ENCODE measurements at regions of chr3 and their contacts with region 1.

Region 1: GRCh38 chr3:117074826-117075225 is 365.2 kb downstream of the TUSC7 start:
- DNase-seq: no peak
- ATAC-seq: no peak
- H3K4me3 ChIP-seq: no peak overlapping the region
- H3K27ac ChIP-seq: no peak overlapping the region
- H3K4me1 ChIP-seq: no peaks in the 10 kb centered on the region
- H3K27me3 ChIP-seq: no peaks in the 10 kb centered on the region
- CTCF ChIP-seq: no peak

Region 2: GRCh38 chr3:117052395-117052794 is 22.4 kb before region 1 on chr3:
- CTCF ChIA-PET with region 1: no interaction called
- POLR2A ChIA-PET with region 1: no interaction called
- in situ Hi-C with region 1: no loop called
- intact Hi-C with region 1: no loop called
- DNase-seq: no peak
- ATAC-seq: no peak
- H3K4me3 ChIP-seq: no peak overlapping the region
- H3K27ac ChIP-seq: no peak overlapping the region
- H3K4me1 ChIP-seq: no peaks in the 10 kb centered on the region
- H3K27me3 ChIP-seq: no peaks in the 10 kb centered on the region
- CTCF ChIP-seq: no peak

Region 3: GRCh38 chr3:117150628-117151027 is 75.8 kb after region 1 on chr3:
- CTCF ChIA-PET with region 1: interaction called, 13 read pairs
- POLR2A ChIA-PET with region 1: no interaction called
- in situ Hi-C with region 1: no loop called
- intact Hi-C with region 1: no loop called
- DNase-seq: no peak
- ATAC-seq: no peak
- H3K4me3 ChIP-seq: no peak overlapping the region
- H3K27ac ChIP-seq: no peak overlapping the region
- H3K4me1 ChIP-seq: no peaks in the 10 kb centered on the region
- H3K27me3 ChIP-seq: no peaks in the 10 kb centered on the region
- CTCF ChIP-seq: no peak